Mammary epithelial cell (primary cell): ENCODE measurements at regions of chr4 and their contacts with region 1.

Region 1: GRCh38 chr4:128751334-128751733 is 58.2 kb upstream of the JADE1 start:
- DNase-seq: no peak
- H3K4me3 ChIP-seq: no peak overlapping the region
- H3K27ac ChIP-seq: no peak overlapping the region
- H3K4me1 ChIP-seq: no peaks in the 10 kb centered on the region
- H3K27me3 ChIP-seq: no peaks in the 10 kb centered on the region
- CTCF ChIP-seq: no peak

Region 2: DNA sequence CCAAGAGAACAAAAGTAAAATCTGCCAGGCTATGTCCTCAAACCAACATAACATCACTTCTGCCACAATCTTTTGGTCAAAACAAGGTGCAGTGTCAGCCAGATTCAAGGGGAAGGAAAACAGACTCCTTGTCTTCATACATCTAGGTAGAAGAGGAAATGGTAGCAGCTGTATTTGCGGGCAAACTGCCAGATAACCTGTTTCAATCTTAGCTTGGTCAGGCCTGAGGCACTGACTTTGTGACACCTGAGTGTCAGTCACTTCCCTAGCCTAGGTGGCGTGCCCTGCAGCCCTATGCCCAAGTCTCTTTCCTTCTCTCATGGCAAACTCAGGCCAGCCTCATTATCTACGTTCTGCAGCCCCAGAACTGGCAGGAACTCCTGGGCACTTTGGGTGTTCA is 88.0 kb before region 1 on chr4:
- CTCF ChIA-PET with region 1: no interaction called
- dilution Hi-C with region 1: loop called (anchors 5 kb)
- in situ Hi-C with region 1: no loop called
- intact Hi-C with region 1: no loop called
- DNase-seq: no peak
- H3K4me3 ChIP-seq: no peak overlapping the region
- H3K27ac ChIP-seq: no peak overlapping the region
- H3K4me1 ChIP-seq: no peaks in the 10 kb centered on the region
- H3K27me3 ChIP-seq: no peaks in the 10 kb centered on the region
- CTCF ChIP-seq: no peak

Region 3: GRCh38 chr4:128707864-128708263 is 43.5 kb before region 1 on chr4:
- CTCF ChIA-PET with region 1: no interaction called
- dilution Hi-C with region 1: no loop called
- in situ Hi-C with region 1: no loop called
- intact Hi-C with region 1: no loop called
- DNase-seq: peak; percentile 76
- H3K4me3 ChIP-seq: peak overlapping the region in 1 of 3 experiments; percentile 26
- H3K27ac ChIP-seq: no peak overlapping the region
- H3K4me1 ChIP-seq: peaks cover 11% of the 10 kb centered on the region
- H3K27me3 ChIP-seq: no peaks in the 10 kb centered on the region
- CTCF ChIP-seq: no peak